ENCODE measurements at regions of chr2 and their contacts with region 1.

Region 1: GRCh38 chr2:237572021-237572741 is 5.8 kb downstream of the PRLH start:
- DNase-seq: peak; percentile 85
- H3K4me3 ChIP-seq: no peak overlapping the region
- H3K27ac ChIP-seq: no peak overlapping the region
- H3K27me3 ChIP-seq: peaks cover 3% of the 10 kb centered on the region
- CTCF ChIP-seq: peak; percentile 98

Region 2: DNA sequence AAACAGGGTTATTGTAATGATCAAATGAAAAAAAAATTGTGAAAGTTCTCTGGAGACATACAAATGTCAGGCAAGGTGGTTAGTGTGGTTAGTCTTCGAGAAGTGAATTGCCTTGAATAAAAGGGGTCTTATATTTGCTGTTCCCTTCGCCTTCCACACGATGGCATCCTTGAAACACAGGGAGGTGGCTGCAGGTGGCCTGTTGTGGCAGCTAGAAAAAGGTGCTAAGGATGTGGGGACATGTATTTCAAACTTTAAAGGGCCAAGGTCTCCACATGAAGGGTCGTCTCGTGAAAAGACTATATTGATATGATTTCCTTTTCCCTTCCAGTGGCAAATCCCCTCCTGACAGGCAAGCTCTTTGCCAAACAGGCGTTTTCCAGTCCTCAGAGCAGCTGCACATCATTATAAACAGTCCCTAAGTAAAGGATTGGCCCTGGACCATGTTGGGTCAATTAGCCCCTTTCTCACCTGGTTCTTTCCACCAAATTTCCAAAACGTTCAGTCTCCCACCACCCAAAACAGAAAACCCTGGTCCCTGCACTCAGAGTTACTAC is 418.0 kb before region 1 on chr2:
- CTCF ChIA-PET with region 1: interaction called, 11 read pairs
- POLR2A ChIA-PET with region 1: no interaction called
- DNase-seq: peak; percentile 53
- H3K4me3 ChIP-seq: no peak overlapping the region
- H3K27ac ChIP-seq: no peak overlapping the region
- H3K27me3 ChIP-seq: no peaks in the 10 kb centered on the region
- CTCF ChIP-seq: peak; percentile 93

Region 3: DNA sequence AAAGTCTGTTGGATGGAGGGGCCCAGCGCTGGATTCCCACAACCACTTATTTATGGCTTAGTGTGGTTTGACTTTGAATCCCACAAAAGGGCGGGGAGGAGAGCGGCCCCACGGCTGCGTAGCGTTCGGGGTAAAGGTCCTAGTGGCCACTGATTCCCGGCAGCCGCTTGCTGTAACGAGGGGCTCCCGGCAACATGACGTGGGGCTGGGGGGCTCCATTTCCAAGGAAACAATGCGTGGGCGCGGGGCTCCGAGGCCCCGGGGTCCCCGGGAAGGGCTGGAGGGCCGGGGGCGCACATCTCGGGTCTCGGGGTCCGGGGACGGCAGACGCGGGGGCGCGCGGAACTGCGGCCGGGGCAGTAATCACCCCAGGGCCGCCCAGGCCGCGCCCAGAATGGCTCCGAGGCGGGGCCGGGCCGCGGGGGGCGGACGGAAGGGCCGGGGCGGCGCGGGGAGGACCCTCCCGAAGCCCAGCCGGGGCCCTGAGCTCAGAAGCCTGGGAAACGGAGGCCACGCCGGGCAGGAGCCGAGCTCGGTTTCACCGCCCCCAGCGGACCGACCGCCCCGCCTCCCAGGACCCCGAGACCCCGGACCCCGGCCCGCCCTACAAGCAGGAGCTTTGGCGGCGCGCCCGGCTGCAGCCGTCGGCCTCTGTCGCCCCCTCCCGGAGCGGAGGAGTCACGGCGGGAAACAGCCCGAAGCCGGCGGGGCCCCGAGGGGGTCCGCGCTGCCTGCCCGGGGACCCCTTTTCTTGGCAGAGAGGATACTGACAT is 97.1 kb before region 1 on chr2:
- CTCF ChIA-PET with region 1: interaction called, 72 read pairs
- POLR2A ChIA-PET with region 1: interaction called, 3 read pairs
- DNase-seq: peak; percentile 51
- H3K4me3 ChIP-seq: peak overlapping the region; percentile 64
- H3K27ac ChIP-seq: peak overlapping the region; percentile 90
- H3K27me3 ChIP-seq: no peaks in the 10 kb centered on the region
- CTCF ChIP-seq: peak; percentile 74

Region 4: GRCh38 chr2:237529452-237530402 is 42.5 kb before region 1 on chr2:
- CTCF ChIA-PET with region 1: interaction called, 10 read pairs
- POLR2A ChIA-PET with region 1: no interaction called
- DNase-seq: no peak
- H3K4me3 ChIP-seq: no peak overlapping the region
- H3K27ac ChIP-seq: no peak overlapping the region
- H3K27me3 ChIP-seq: no peaks in the 10 kb centered on the region
- CTCF ChIP-seq: no peak

Region 5: DNA sequence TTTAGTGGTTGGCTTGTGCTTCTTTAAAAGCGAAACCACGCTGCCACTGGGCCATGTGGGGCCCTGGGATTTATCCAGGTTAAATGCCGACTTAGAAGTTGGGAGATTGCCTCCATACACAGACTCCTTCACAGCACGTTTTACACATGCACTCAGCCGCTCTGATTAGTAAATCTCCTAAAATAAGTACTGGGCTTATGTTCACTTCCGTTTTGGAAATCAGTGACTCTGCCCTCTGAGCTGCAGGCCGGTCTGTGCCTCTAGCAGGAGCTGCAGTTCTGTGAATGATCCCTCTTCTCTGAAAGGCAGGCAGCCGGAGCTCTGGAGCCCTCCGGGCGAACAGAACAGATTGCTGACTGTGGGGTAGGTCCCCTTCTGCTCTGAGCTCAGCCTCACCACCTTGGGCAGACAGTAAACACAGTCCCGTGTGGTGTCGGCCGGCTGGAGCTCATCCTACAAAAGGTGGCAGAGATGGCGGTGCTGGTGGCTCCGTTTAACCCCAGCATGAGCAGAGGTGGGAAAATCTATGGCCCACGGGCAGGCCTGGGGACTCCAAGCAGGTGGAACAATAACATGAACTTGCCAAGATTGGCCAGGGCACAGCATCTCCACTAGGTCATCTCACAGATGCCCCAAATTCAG is 28.1 kb after region 1 on chr2:
- CTCF ChIA-PET with region 1: interaction called, 13 read pairs
- POLR2A ChIA-PET with region 1: no interaction called
- DNase-seq: no peak
- H3K4me3 ChIP-seq: no peak overlapping the region
- H3K27ac ChIP-seq: peak overlapping the region; percentile 21
- H3K27me3 ChIP-seq: no peaks in the 10 kb centered on the region
- CTCF ChIP-seq: peak; percentile 39; the same call in 1 of the 2 replicates